H1 (cell line): ENCODE measurements at regions of chr2 and their contacts with region 1.

Region 1: GRCh38 chr2:176161819-176162626 is 4.9 kb downstream of the HOXD3 start:
- DNase-seq: no peak
- H3K4me3 ChIP-seq: no peak overlapping the region
- H3K27ac ChIP-seq: no peak overlapping the region
- H3K4me1 ChIP-seq: peaks cover 0 to 12% (median 6%) of the 10 kb centered on the region in 4 experiments; a peak in 5 of 7 replicates
- H3K27me3 ChIP-seq: peaks cover 98 to 100% (median 100%) of the 10 kb centered on the region in 4 experiments
- CTCF ChIP-seq: no peak
- EP300 ChIP-seq: no peak
- POLR2A ChIP-seq: no peak
- RAD21 ChIP-seq: no peak

Region 2: GRCh38 chr2:175766880-175767279 is 395.1 kb before region 1 on chr2:
- CTCF ChIA-PET with region 1: no interaction called
- POLR2A ChIA-PET with region 1: no interaction called
- DNase-seq: no peak
- H3K4me3 ChIP-seq: no peak overlapping the region
- H3K27ac ChIP-seq: no peak overlapping the region
- H3K4me1 ChIP-seq: no peaks in the 10 kb centered on the region
- H3K27me3 ChIP-seq: no peaks in the 10 kb centered on the region
- CTCF ChIP-seq: no peak
- EP300 ChIP-seq: no peak
- POLR2A ChIP-seq: no peak
- RAD21 ChIP-seq: no peak

Region 3: GRCh38 chr2:176072951-176073904 is 88.8 kb before region 1 on chr2:
- CTCF ChIA-PET with region 1: no interaction called
- POLR2A ChIA-PET with region 1: no interaction called
- DNase-seq: peak in 1 of 2 experiments; percentile 57
- H3K4me3 ChIP-seq: no peak overlapping the region
- H3K27ac ChIP-seq: no peak overlapping the region
- H3K4me1 ChIP-seq: peaks cover 3 to 9% (median 6%) of the 10 kb centered on the region in 4 experiments; a peak in 5 of 7 replicates
- H3K27me3 ChIP-seq: peaks cover 90 to 100% (median 96%) of the 10 kb centered on the region in 4 experiments
- CTCF ChIP-seq: peak in 2 of 3 experiments; percentile 8 to 10; a peak in 2 of 4 replicates
- EP300 ChIP-seq: no peak
- POLR2A ChIP-seq: no peak
- RAD21 ChIP-seq: no peak

Region 4: DNA sequence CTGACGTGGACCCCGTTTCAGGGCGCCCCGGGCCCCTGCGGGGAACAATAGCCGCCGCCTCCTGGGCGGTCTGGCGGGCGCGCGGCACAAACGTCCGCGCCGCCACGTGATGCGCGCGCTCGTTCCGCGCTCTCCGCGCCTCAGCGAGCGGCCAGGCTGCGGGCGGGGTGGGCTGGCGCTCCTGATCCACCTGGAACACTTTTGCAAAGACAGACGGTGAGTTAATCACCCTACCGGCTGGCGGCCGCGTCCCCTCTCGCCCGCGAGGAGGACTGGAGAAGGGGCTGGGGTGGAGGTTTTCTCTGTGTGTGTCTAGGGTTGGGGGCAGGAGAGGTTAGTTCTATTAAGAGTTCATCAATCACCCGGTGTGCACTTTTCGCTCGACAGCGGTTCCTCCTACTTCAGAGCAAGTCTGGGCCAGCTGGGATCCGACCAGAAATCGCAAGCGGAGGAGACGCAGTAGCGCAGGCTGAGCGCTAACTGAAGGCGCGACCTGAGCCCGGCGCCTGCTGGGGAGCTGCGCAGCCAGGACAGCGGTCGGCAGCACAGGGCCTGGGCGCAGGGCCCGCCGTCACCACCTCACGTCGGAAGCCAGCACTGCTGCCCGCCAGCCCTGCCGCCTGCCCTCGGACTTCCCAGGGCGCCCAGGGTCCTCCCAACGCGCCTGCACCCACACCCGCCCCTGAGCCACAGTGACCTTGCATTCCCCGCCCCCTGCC is 16.2 kb after region 1 on chr2:
- CTCF ChIA-PET with region 1: interaction called, 26 read pairs
- POLR2A ChIA-PET with region 1: interaction called, 3 read pairs
- DNase-seq: peak in 1 of 2 experiments; percentile 74
- H3K4me3 ChIP-seq: peak overlapping the region; percentile 24 to 56 (median 34); a peak in 6 of 8 replicates
- H3K27ac ChIP-seq: no peak overlapping the region
- H3K4me1 ChIP-seq: peaks cover 3 to 17% (median 7%) of the 10 kb centered on the region in 4 experiments
- H3K27me3 ChIP-seq: peaks cover 92 to 99% (median 97%) of the 10 kb centered on the region in 4 experiments
- CTCF ChIP-seq: no peak
- EP300 ChIP-seq: no peak
- POLR2A ChIP-seq: no peak
- RAD21 ChIP-seq: 0 out of 4 replicates have a peak, but pooled peaks of 1 of the 2 experiments have one; percentile 4